ENCODE measurements at regions of chr1 and their contacts with region 1.

Region 1: DNA sequence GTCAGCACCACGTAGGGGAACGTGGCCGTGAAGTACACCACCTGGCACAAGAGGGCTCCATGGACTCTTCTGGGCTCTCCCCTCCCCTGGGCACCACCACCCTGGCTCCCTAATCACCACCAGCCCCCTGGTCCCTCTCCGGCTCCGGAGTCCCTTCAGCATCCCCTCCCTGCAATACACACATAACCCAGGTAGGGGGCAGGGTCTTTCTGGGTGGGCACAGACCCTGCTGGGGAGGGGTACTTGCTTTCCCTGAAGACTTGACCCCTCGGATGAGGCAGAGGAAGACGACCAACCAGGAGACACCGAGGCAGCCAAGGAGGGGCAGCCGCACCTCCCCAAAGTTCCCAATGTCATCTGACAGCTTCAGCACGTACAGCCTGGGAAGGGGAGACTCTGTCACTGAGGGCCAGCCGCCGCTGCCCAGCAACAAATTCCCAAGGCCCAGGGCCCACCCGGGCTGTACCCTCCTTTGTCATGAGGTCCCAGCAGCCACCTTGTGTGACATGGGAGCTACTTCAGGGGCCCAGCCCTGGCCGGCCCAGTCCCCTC is 11.3 kb downstream of the CCDC24 start:
- DNase-seq: no peak
- ATAC-seq: no peak
- H3K4me3 ChIP-seq: no peak overlapping the region
- H3K27ac ChIP-seq: no peak overlapping the region
- H3K4me1 ChIP-seq: peaks cover 0 to 5% (median under 1%) of the 10 kb centered on the region in 12 donors
- H3K27me3 ChIP-seq: no peaks in the 10 kb centered on the region
- CTCF ChIP-seq: no peak
- POLR2A ChIP-seq: no peak

Region 2: DNA sequence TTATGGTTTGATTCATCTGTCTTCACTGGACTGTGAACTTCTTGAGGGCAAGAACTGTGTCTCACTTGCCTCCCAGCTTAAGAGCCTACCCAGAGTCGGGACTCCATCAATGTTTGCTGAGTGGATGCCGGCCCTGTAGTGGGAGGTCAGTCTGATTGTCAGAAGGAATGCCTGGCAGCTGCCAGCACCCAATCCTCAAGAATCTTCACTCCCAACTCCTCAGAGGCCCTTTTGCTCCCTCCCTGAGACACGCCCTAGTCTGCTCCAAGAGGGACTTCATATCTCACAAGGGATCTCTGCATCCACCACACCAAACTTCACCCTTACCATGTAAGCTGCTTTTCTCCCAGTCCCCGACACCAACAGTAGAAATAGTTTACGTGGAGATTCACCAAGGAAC is 368.0 kb before region 1 on chr1:
- intact Hi-C with region 1: no loop called
- DNase-seq: no peak
- ATAC-seq: no peak
- H3K4me3 ChIP-seq: no peak overlapping the region
- H3K27ac ChIP-seq: no peak overlapping the region
- H3K4me1 ChIP-seq: no peaks in the 10 kb centered on the region
- H3K27me3 ChIP-seq: no peaks in the 10 kb centered on the region
- CTCF ChIP-seq: no peak
- POLR2A ChIP-seq: no peak

Region 3: GRCh38 chr1:43822040-43822439 is 180.6 kb before region 1 on chr1:
- intact Hi-C with region 1: no loop called
- DNase-seq: peak in 1 of 5 donors; percentile 45
- ATAC-seq: peak in 3 of 4 donors; percentile 69 to 93 (median 71)
- H3K4me3 ChIP-seq: no peak overlapping the region
- H3K27ac ChIP-seq: peak overlapping the region in 3 of 12 donors; percentile 8 to 55 (median 11)
- H3K4me1 ChIP-seq: peaks cover 0 to 27% (median 8%) of the 10 kb centered on the region in 12 donors
- H3K27me3 ChIP-seq: no peaks in the 10 kb centered on the region
- CTCF ChIP-seq: no peak
- POLR2A ChIP-seq: no peak

Region 4: DNA sequence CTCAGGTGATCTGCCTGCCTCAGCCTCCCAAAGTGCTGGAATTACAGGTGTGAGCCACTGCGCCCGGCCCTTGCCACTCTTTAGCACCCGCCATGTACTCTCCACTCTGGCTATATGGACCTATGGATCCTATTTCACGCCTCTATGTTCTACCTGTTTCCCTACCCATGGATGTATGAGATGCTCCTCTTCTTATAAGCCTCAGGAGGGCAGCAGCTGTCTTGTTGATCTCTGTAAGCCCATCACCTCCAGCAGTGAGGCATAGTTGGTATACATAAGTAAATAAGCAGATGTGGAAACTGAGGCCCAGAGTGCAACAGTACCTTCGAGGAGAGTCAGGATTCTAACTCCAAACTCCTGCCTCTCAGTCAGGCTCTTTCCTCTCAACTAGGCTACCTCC is 93.8 kb before region 1 on chr1:
- intact Hi-C with region 1: no loop called
- DNase-seq: no peak
- ATAC-seq: no peak
- H3K4me3 ChIP-seq: no peak overlapping the region
- H3K27ac ChIP-seq: no peak overlapping the region
- H3K4me1 ChIP-seq: peaks cover 0 to 7% (median 0%) of the 10 kb centered on the region in 12 donors
- H3K27me3 ChIP-seq: no peaks in the 10 kb centered on the region
- CTCF ChIP-seq: no peak
- POLR2A ChIP-seq: no peak

Region 5: GRCh38 chr1:44036409-44037139 is 33.9 kb after region 1 on chr1:
- intact Hi-C with region 1: loop called in 8 of 10 experiments (anchors 1 to 5 kb)
- DNase-seq: peak in 4 of 5 donors; percentile 49 to 68 (median 57)
- ATAC-seq: peak; percentile 40 to 77 (median 66)
- H3K4me3 ChIP-seq: no peak overlapping the region
- H3K27ac ChIP-seq: peak overlapping the region in 9 of 12 donors; percentile 30 to 88 (median 61)
- H3K4me1 ChIP-seq: peaks cover 3 to 33% (median 20%) of the 10 kb centered on the region in 12 donors
- H3K27me3 ChIP-seq: no peaks in the 10 kb centered on the region
- CTCF ChIP-seq: peak; percentile 64 to 85 (median 74)
- POLR2A ChIP-seq: no peak

Region 6: DNA sequence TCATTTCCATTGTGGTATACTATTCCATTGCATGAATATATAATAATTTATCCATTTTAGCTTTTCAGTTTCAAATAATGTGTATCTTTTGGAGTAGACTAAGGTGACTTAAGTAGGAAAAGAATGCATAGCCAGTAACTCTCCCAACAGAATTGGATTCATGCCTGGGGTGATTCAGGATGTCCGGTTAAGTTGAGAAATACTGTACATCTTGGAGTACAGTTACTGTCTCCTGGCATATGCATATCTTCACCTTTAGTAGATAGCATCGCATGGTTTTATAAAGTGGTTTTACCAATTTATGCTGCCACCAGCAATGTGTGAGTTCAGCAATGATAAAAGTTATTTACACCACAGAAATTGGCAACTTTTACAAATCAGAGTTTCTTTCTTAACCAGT is 47.2 kb after region 1 on chr1:
- intact Hi-C with region 1: loop called in 4 of 10 experiments (anchors 1 to 5 kb)
- DNase-seq: no peak
- ATAC-seq: no peak
- H3K4me3 ChIP-seq: no peak overlapping the region
- H3K27ac ChIP-seq: peak overlapping the region in 1 of 12 donors; percentile 54
- H3K4me1 ChIP-seq: peaks cover 0 to 33% (median 0%) of the 10 kb centered on the region in 12 donors
- H3K27me3 ChIP-seq: no peaks in the 10 kb centered on the region
- CTCF ChIP-seq: no peak
- POLR2A ChIP-seq: no peak

Region 7: GRCh38 chr1:44377925-44378784 is 375.5 kb after region 1 on chr1:
- intact Hi-C with region 1: no loop called
- DNase-seq: peak in 3 of 5 donors; percentile 30 to 50 (median 35)
- ATAC-seq: peak in 1 of 4 donors; percentile 50
- H3K4me3 ChIP-seq: no peak overlapping the region
- H3K27ac ChIP-seq: no peak overlapping the region
- H3K4me1 ChIP-seq: no peaks in the 10 kb centered on the region
- H3K27me3 ChIP-seq: no peaks in the 10 kb centered on the region
- CTCF ChIP-seq: peak; percentile 59 to 85 (median 74)
- POLR2A ChIP-seq: no peak

Region 8: GRCh38 chr1:44594871-44595746 is 592.4 kb after region 1 on chr1:
- intact Hi-C with region 1: loop called in 2 of 10 experiments (anchors 10 kb)
- DNase-seq: peak; percentile 77 to 93 (median 79)
- ATAC-seq: peak; percentile 92 to 96 (median 94)
- H3K4me3 ChIP-seq: no peak overlapping the region
- H3K27ac ChIP-seq: no peak overlapping the region
- H3K4me1 ChIP-seq: peaks cover 0 to 3% (median 0%) of the 10 kb centered on the region in 12 donors
- H3K27me3 ChIP-seq: peaks cover 0 to 11% (median 0%) of the 10 kb centered on the region in 9 donors
- CTCF ChIP-seq: peak in 11 of 12 donors; percentile 88 to 99 (median 98)
- POLR2A ChIP-seq: no peak

Region 9: GRCh38 chr1:44609412-44609767 is 606.7 kb after region 1 on chr1:
- intact Hi-C with region 1: loop called in 1 of 10 experiments (anchors 10 kb)
- DNase-seq: peak in 4 of 5 donors; percentile 37 to 68 (median 51)
- ATAC-seq: peak; percentile 31 to 78 (median 76)
- H3K4me3 ChIP-seq: no peak overlapping the region
- H3K27ac ChIP-seq: no peak overlapping the region
- H3K4me1 ChIP-seq: no peaks in the 10 kb centered on the region
- H3K27me3 ChIP-seq: peaks cover 0 to 21% (median 0%) of the 10 kb centered on the region in 9 donors
- CTCF ChIP-seq: peak in 11 of 12 donors; percentile 29 to 60 (median 51)
- POLR2A ChIP-seq: no peak

Measured in heart left ventricle (tissue), 16 donors.